ENCODE measurements at regions of chr12 and their contacts with region 1.

Region 1: DNA sequence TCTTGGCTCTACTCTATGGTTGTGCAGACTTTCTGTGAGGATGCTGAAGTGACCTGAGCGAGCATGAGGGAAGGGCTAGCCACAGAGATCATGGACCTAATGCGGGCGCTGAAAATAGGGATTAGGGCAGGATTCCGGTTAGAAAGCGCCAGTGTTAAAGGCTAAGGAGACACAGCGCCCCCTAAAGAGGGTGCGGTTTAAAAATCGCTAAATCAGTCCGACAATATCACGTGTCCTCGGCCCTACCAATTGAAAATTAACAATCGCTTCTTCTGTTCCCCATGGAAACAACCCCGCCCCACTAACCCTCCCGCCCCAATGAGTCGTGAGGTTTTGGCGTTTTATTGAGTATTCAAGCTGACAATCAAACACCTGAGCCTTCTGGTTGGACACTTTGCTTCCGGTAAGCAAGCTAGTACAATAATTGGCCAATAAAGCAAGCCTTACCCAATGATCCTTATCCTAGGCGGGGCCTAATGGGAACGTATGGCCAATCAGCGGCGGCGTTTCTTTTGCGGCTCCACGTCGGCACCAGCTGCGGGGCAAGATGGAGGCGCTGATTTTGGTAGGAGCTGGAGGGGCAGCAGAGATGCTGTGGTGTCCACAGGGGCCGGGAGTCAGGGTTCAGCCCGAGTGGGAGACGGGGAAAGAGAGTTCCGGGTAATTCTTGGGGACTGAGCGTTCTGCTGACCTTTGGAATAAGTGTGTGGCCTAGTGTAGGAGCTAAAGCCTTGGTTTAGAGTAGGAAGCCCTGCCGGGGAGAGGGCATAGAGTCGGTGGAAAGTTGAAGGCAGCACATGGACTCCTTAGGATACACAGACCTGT is at the start of gene COPZ1:
- DNase-seq: peak; percentile 98
- ATAC-seq: peak; percentile 99
- H3K4me3 Mint-ChIP-seq: peak within 1 kb of the TSS; percentile 98
- H3K27ac Mint-ChIP-seq: peak within 1 kb of the TSS; percentile 94
- H3K4me1 Mint-ChIP-seq: peaks cover 28% of the 10 kb centered on the region
- H3K27me3 Mint-ChIP-seq: no peaks in the 10 kb centered on the region
- CTCF ChIP-seq: peak; percentile 65
- total RNA-seq, gene COPZ1: 75.8 to 78.4 TPM

Region 2: GRCh38 chr12:54126696-54127537 is 197.9 kb before region 1 on chr12:
- CTCF ChIA-PET with region 1: no interaction called
- POLR2A ChIA-PET with region 1: no interaction called
- intact Hi-C with region 1: no loop called
- DNase-seq: peak; percentile 25
- ATAC-seq: peak; percentile 30
- H3K4me3 Mint-ChIP-seq: peak overlapping the region; percentile 27
- H3K27ac Mint-ChIP-seq: no peak overlapping the region
- H3K4me1 Mint-ChIP-seq: peaks cover 17% of the 10 kb centered on the region
- H3K27me3 Mint-ChIP-seq: peaks cover 52% of the 10 kb centered on the region
- CTCF ChIP-seq: no peak

Region 3: DNA sequence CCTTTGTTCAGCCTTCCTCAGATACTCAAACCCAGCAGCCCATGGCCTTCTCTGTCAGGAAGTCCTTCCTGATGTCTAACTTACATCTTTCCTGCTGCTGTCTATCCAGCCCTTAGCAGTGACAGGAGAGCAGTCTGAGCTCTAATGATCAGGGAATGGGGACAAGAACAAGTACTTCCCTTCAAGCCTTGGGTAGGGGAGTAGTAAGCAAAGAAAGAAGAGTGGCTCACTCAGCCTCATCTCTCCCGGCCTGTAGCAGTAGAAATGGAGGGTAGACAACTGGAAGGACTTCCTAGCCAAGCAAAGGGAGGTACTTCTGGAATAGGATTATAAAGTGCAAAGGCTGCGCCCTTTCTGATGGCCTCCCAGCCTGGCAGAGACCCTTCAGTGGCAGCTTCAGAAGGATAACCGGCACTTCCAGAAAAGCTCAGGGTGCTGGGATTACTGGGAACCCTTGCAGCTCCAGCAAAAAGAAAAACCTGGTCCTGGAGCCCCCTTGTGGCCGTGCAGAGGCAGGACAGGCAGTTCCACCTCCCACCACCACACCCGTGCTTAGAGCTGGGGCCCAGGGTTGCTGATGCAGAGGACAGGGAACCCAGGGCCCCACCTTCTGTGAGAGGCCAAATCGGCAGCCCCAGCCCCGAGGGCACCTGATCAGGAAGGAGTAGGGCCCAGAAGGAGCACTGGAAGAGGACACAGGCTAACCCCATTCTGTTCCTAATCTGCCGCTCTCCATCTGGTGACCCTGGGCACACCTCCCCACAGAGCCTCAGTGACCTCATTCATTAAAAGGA is 123.6 kb before region 1 on chr12:
- CTCF ChIA-PET with region 1: no interaction called
- POLR2A ChIA-PET with region 1: no interaction called
- intact Hi-C with region 1: no loop called
- DNase-seq: peak; percentile 72
- ATAC-seq: peak; percentile 96
- H3K4me3 Mint-ChIP-seq: no peak overlapping the region
- H3K27ac Mint-ChIP-seq: no peak overlapping the region
- H3K4me1 Mint-ChIP-seq: no peaks in the 10 kb centered on the region
- H3K27me3 Mint-ChIP-seq: peaks cover 52% of the 10 kb centered on the region
- CTCF ChIP-seq: peak; percentile 94

Region 4: DNA sequence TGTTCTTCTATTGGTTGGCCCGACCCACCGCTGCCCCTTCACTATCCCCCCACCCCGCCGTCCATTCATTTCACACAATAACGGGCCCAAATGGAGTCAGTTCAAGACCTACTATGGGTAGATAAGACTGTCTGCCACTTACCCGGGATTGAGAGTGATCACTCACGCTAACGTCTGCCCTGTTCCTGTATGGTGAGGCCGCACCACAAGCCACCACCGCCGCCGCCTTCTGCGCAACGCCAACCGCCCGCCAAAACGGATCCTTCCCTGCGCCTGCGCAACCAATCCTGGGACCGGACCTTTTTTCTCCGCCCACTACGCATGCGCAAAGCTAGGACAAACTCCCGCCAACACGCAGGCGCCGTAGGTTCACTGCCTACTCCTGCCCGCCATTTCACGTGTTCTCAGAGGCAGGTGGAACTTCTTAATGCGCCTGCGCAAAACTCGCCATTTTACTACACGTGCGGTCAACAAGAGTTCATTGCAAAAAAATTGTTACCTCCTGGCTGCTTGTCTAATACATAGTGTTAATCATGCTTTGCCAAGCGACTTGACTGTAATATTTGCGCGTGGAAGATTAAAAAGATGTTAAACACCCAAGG is 44.9 kb before region 1 on chr12 and contains the start of gene CBX5:
- CTCF ChIA-PET with region 1: interaction called, 20 read pairs
- POLR2A ChIA-PET with region 1: interaction called, 5 read pairs
- intact Hi-C with region 1: loop called (anchors 2 kb)
- DNase-seq: peak; percentile 99
- ATAC-seq: peak; percentile 57
- H3K4me3 Mint-ChIP-seq: no peak within 1 kb of the TSS
- H3K27ac Mint-ChIP-seq: no peak within 1 kb of the TSS
- H3K4me1 Mint-ChIP-seq: peaks cover 43% of the 10 kb centered on the region
- H3K27me3 Mint-ChIP-seq: no peaks in the 10 kb centered on the region
- CTCF ChIP-seq: no peak
- total RNA-seq, gene CBX5: 125 to 128 TPM

Region 5: GRCh38 chr12:54294152-54294952 is 30.5 kb before region 1 on chr12:
- CTCF ChIA-PET with region 1: interaction called, 93 read pairs
- POLR2A ChIA-PET with region 1: interaction called, 7 read pairs
- intact Hi-C with region 1: no loop called
- DNase-seq: peak; percentile 77
- ATAC-seq: peak; percentile 88
- H3K4me3 Mint-ChIP-seq: no peak overlapping the region
- H3K27ac Mint-ChIP-seq: no peak overlapping the region
- H3K4me1 Mint-ChIP-seq: peaks cover 4% of the 10 kb centered on the region
- H3K27me3 Mint-ChIP-seq: peaks cover 13% of the 10 kb centered on the region
- CTCF ChIP-seq: peak; percentile 79

Region 6: DNA sequence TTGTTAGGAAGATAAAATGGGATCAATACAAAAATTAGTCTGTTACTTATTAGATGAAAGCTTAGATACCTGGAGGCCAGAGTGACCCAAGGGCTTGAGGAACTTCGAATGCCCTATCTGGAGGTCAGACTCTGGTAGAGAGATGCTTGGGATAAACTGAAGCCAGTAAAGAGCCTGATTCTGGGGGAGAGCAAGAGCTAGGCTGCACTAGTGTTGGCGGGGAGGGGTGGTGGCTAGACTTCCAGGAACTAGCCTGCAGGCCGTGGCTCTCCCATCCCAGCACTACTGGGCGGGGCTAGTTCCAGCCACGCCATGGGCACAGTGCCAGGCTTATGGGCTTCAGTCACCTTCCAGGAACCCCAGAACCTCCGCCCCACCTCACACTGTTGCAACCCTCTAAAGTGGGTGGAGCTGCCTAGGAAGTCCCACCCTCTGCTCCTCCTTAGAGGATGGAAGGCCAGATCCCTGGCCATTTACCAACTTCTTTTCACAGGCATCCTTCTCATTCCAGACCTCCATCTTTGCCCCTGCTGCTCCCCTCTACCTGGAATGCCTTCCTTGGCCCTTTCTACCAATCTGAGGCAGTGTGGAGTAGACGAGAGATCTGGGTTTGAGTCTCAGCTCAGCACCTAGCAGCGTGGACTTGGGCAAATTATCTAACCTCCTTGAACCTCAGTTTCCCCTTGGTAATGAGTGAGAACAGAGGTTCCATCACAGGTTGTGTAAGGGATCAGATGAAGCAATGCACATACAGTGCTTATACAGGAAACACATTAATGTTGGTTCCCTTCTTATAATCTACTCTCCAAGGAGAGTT is 17.7 kb before region 1 on chr12:
- CTCF ChIA-PET with region 1: interaction called, 12 read pairs
- POLR2A ChIA-PET with region 1: interaction called, 3 read pairs
- intact Hi-C with region 1: no loop called
- DNase-seq: peak; percentile 44
- ATAC-seq: peak; percentile 69
- H3K4me3 Mint-ChIP-seq: no peak overlapping the region
- H3K27ac Mint-ChIP-seq: no peak overlapping the region
- H3K4me1 Mint-ChIP-seq: peaks cover 9% of the 10 kb centered on the region
- H3K27me3 Mint-ChIP-seq: peaks cover 15% of the 10 kb centered on the region
- CTCF ChIP-seq: no peak

Region 7: DNA sequence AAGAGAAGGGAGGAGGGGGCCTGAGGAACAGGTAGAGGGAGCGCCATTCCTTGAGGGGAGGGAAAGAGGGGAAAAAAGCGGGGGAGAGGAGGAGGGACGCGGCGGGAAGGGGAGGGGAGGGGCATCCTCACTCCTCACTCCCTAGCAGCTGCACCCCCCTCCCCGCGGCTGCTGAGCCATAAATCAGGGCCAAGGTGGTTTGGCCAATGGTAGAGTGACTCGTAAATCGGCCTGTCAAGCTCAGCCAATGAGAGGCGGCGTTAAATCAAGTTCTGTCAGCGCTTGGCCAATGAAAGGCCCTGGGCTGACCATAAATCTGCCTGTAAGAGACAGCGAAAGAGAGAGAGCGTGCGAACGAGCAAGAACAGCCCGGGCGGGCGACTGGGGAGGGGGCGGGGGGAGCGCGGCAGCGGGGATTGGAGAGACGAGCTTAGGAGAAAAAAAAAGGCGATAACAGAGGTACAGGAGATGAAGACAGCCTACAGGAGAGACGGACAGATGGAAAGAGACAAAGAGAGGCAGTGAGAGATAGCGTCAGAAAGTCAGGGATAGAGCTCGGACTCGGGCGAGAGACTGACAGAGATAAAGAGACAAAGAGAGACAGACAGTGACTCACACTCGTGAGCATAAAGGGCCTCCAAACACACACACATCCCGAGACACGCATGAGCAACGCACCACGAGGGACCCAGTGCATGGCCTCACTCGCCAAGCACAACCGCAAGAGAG is 34.4 kb after region 1 on chr12:
- CTCF ChIA-PET with region 1: interaction called, 11 read pairs
- POLR2A ChIA-PET with region 1: interaction called, 5 read pairs
- intact Hi-C with region 1: loop called (anchors 5 kb)
- DNase-seq: peak; percentile 97
- ATAC-seq: peak; percentile 93
- H3K4me3 Mint-ChIP-seq: no peak overlapping the region
- H3K27ac Mint-ChIP-seq: no peak overlapping the region
- H3K4me1 Mint-ChIP-seq: peaks cover 17% of the 10 kb centered on the region
- H3K27me3 Mint-ChIP-seq: no peaks in the 10 kb centered on the region
- CTCF ChIP-seq: no peak

Measured in activated CD8-positive, alpha-beta T cell treated with anti-CD3 and anti-CD28 coated beads for 36 hours (primary cell).